ENCODE measurements at regions of chr3 and their contacts with region 1.

Region 1: GRCh38 chr3:36957862-36958686 is 13.2 kb upstream of the TRANK1 start:
- DNase-seq: no peak
- H3K4me3 ChIP-seq: no peak overlapping the region
- H3K27ac ChIP-seq: no peak overlapping the region
- H3K4me1 ChIP-seq: no peaks in the 10 kb centered on the region
- H3K27me3 ChIP-seq: no peaks in the 10 kb centered on the region
- CTCF ChIP-seq: no peak

Region 2: GRCh38 chr3:36729204-36730056 is 228.6 kb before region 1 on chr3:
- intact Hi-C with region 1: loop called (anchors 1 kb)
- DNase-seq: no peak
- H3K4me3 ChIP-seq: no peak overlapping the region
- H3K27ac ChIP-seq: no peak overlapping the region
- H3K4me1 ChIP-seq: no peaks in the 10 kb centered on the region
- H3K27me3 ChIP-seq: no peaks in the 10 kb centered on the region
- CTCF ChIP-seq: peak; percentile 48 to 69 (median 59)

Region 3: GRCh38 chr3:36907911-36908646 is 50.0 kb before region 1 on chr3:
- intact Hi-C with region 1: loop called (anchors 5 kb)
- DNase-seq: peak; percentile 22 to 76
- H3K4me3 ChIP-seq: peak overlapping the region; percentile 52 to 61
- H3K27ac ChIP-seq: peak overlapping the region; percentile 55 to 62
- H3K4me1 ChIP-seq: peaks cover 0 to 4% of the 10 kb centered on the region in 2 donors
- H3K27me3 ChIP-seq: no peaks in the 10 kb centered on the region
- CTCF ChIP-seq: no peak

Measured in ascending aorta (tissue), 2 donors.